Activated T-helper 2 cell treated with anti-CD3 and anti-CD28 coated beads, Interferon-gamma antibody, Interleukin-2, Interleukin-4, amounts not matched to agents 10 μg/mL and 5 μg/mL and 100 μg/mL, durations not matched to agents 14 hours and 24 hours and 36 hours (primary cell): ENCODE measurements at regions of chr6 and their contacts with region 1.

Region 1: DNA sequence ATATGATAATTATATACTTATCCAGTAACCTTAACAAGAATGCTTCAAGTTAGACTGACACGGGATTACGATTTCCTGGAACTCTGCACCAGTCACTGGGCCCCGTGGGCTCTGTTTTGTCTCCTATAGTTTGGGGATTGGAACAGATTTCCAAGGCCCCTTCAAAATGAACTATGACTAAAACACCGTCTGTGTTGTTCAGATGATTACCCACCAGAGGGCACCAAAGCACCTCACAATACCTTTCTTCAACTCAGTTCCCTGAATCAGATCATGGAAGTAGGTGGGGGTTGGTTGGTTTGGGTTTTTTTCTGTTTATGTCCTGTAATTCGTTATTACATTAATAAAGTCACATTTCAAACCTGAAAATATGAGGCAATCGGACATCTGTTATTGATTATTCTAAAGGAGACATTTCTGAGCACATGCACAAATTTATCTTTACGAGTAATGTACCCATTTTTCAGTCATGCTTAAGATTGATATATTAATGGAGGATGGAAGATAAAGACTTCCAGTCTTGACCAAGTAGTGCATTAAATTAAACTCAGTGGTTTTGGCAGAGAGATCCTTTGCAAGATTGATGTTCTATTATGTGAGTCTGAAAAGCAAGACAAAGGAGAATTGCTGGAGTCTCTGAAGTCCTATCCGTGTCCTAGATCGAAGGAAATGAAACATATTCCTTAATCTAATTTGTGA is 112.0 kb upstream of the COL21A1 start:
- DNase-seq: peak; percentile 29
- H3K4me3 Mint-ChIP-seq: no peak overlapping the region
- H3K27ac Mint-ChIP-seq: no peak overlapping the region
- H3K4me1 Mint-ChIP-seq: peaks cover 1% of the 10 kb centered on the region
- H3K27me3 Mint-ChIP-seq: peaks cover 5% of the 10 kb centered on the region

Region 2: DNA sequence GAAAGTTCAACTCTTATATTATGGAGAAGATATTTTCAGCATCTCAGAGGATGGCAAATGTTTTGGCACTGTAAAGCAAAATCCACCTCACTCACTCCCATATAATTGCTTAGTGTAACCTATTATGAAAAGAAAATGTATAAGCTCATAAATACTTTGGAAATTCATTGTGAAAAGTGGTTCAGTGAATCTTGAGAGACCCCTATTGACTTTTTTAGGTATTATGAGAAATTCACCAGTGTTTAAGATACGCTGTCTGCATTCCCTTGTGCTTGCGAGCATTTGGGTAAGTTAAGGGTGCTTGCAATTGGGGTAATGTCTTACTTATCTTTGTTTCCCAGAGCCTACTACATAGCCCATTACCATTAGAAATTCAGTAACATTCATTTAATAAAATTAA is 417.6 kb before region 1 on chr6:
- intact Hi-C with region 1: no loop called
- DNase-seq: no peak
- H3K4me3 Mint-ChIP-seq: no peak overlapping the region
- H3K27ac Mint-ChIP-seq: no peak overlapping the region
- H3K4me1 Mint-ChIP-seq: no peaks in the 10 kb centered on the region
- H3K27me3 Mint-ChIP-seq: no peaks in the 10 kb centered on the region

Region 3: GRCh38 chr6:56329271-56330050 is 29.9 kb before region 1 on chr6:
- intact Hi-C with region 1: no loop called
- DNase-seq: no peak
- H3K4me3 Mint-ChIP-seq: no peak overlapping the region
- H3K27ac Mint-ChIP-seq: no peak overlapping the region
- H3K4me1 Mint-ChIP-seq: no peaks in the 10 kb centered on the region
- H3K27me3 Mint-ChIP-seq: peaks cover 3% of the 10 kb centered on the region

Region 4: GRCh38 chr6:56570413-56571359 is 211.3 kb after region 1 on chr6:
- intact Hi-C with region 1: loop called (anchors 1 kb)
- DNase-seq: no peak
- H3K4me3 Mint-ChIP-seq: no peak overlapping the region
- H3K27ac Mint-ChIP-seq: no peak overlapping the region
- H3K4me1 Mint-ChIP-seq: no peaks in the 10 kb centered on the region
- H3K27me3 Mint-ChIP-seq: peaks cover 2% of the 10 kb centered on the region

Region 5: DNA sequence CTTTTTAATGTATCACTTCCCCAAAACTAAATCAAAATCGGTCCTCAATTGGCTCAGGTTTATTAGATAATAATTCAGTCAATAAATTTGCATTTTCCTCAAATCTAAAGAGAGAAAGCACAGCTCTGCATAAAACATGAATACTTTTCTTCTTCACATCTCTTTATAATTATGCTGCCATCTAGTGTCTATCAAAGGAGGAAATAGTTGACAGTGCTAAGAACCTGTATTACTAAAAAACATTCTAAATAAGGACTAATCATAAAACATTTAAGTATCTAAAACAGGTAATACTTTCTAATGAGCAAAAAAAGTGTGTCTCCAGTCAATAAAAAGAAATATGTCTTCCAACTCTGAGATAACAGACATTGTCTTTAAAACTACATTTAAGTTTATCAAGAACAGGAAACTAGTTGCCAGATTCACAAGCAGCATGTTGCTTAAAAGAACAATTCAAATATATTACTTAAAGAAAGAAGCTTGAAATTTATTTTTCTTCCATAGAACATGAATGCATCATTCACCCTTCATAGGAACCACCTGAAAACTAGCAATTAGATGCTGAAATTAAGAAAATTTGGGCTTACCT is 339.8 kb after region 1 on chr6:
- intact Hi-C with region 1: loop called (anchors 2 kb)
- DNase-seq: no peak
- H3K4me3 Mint-ChIP-seq: no peak overlapping the region
- H3K27ac Mint-ChIP-seq: no peak overlapping the region
- H3K4me1 Mint-ChIP-seq: no peaks in the 10 kb centered on the region
- H3K27me3 Mint-ChIP-seq: peaks cover 2% of the 10 kb centered on the region